HEK293T (cell line): ENCODE measurements at regions of chr1 and their contacts with region 1.

Region 1: DNA sequence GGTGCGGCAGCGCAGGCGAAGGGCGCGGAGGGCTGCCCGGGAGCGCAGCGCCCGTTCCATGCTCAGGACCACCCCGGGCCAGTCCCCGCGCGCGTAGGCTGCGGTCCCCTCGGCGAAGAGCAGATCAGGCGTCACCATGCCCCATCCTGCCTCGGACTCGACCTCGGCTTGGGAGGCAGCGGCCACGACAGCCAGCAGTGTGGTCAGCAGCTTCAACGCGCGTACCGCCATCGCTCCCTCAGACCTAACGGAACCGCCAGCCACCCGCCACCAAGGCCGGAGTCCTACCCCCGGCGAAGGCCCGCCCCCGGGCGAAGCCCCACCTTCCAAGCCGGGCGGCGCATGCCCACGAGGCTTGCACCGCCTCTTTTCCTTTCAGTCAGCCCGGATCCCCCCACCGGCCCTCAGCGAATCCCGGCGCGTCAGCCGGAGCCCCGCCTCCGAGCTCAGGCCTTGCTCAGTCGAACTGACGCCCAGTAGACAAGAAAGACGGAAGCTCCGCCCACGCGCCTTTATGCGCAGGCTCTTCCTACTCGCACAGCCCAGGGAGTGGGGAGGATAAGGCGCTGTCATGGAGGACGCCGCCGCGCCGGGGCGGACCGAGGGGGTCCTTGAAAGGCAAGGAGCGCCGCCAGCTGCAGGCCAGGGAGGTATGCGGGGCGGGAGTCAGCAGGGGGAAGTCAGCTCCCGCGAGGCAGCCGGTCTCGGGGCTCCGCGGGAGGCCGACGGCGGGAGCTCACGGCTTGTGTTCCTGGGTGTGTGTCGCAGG is at the starts of genes C1orf50 and P3H1:
- DNase-seq: peak; percentile 95

Region 2: DNA sequence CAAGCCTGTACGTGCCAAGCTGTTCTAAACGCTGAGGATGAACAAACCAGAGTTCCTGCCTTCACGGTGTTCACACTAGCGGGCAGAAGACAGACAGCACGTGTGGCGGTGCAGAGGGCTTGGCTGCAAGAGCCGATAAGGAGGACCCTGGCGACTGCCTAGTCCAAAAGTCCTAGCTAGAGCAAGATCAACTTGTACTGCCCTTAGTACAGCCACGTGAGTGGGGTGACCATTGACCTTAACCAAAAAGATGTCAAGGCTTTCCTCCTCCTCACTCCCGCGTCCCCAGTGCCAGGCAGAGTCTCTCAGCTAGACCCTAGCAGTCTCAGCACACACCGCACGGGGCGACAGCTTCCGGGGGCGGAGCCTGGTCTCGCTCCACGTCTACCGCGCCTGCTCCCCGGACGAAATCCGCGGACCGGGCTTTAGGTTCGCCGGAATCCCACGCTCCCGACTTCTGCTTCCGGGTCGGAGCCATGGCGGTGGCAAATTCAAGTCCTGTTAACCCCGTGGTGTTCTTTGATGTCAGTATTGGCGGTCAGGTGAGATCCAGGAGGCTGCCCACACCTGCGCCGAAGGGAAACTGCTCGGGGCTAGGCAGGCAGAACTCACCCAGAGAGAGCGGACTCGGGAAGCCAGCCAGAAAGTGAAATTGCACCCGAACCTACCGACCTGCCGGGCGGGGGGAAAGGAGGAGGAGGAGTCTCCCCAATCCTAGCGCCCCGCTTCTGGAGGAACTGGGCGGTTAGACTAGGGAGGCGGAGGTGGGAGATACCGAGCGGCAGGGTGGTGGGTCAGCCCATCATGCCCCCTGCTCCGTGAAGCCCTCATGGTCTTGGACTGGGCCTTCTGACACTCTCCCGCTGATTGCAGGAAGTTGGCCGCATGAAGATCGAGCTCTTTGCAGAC is 108.7 kb before region 1 on chr1 and contains the start of gene PPIH:
- CTCF ChIA-PET with region 1: no interaction called
- POLR2A ChIA-PET with region 1: interaction called, 12 read pairs
- DNase-seq: peak; percentile 96

Region 3: DNA sequence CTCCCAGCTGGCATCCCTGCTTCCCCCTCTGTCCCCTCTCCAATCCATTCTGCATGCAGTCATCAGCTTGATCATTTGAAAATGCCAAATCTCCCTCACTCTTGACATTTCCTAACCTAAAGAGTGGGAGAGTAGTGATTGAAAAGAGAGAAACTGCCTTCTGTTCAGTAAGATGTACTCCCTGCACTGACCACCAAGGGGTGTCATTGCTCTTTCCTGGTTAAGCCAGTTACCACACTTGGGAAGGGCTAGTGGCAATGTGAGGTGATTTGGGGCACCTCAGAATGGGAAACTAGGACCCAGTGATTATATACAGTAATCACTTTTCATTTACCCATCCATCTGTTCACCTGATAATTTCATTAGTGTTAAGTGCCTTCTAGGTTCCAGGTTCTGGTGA is 10.9 kb after region 1 on chr1:
- CTCF ChIA-PET with region 1: interaction called, 11 read pairs
- POLR2A ChIA-PET with region 1: interaction called, 44 read pairs
- DNase-seq: peak; percentile 63

Region 4: DNA sequence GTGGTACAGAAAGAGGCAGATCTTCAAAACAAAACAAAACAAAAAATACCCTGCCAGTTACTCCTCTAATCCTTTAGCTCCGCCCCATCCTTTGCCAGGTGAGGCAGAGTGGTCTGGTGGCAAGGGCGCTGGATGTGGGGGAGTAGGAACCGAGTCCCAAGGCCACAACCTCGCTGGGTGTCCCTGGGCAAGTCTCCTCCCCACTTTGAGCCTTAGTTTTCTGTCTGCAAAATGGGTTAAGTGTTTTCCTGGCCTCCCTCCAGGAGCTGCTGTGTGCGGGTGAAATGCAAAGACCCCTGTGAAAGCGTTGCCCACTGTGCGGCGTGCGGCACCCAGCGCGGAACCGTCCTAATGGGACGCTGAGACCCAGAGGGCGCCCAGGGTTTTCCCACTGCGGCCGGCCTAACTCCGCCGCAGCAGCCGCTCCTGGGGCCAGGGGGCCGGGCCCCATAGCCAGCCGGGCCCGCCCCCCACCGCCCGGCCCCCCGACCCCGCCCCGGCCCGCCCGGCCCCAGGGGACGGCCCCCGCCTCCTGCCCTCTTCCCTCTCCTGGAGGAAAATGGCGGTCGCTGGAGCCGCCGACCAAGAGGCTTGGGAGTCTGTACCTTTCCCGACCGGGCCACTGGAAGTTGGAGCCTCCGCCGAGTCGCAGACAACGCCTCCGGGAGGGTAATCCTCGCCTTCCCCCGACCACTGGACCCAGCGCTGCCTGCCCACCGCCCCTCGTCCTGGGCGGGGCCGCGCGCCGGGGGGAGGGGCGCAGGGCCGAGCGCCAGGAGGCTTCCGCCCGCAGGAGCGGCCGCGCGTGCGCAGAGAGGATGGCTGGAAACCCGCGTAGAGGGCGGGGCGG is 49.9 kb after region 1 on chr1 and contains the starts of genes ERMAP and SVBP:
- CTCF ChIA-PET with region 1: no interaction called
- POLR2A ChIA-PET with region 1: interaction called, 22 read pairs
- DNase-seq: peak; percentile 98

Region 5: GRCh38 chr1:43073490-43074230 is 306.7 kb after region 1 on chr1:
- CTCF ChIA-PET with region 1: interaction called, 10 read pairs
- POLR2A ChIA-PET with region 1: interaction called, 10 read pairs
- DNase-seq: peak; percentile 73